PC-9 (cell line): ENCODE measurements at regions of chr10 and their contacts with region 1.

Region 1: GRCh38 chr10:511101-511848 is 178.2 kb downstream of the DIP2C start:
- DNase-seq: peak in 1 of 2 experiments; percentile 86
- H3K4me3 ChIP-seq: no peak overlapping the region
- H3K27ac ChIP-seq: no peak overlapping the region
- H3K4me1 ChIP-seq: no peaks in the 10 kb centered on the region
- H3K27me3 ChIP-seq: peaks cover 26% of the 10 kb centered on the region; the same call in 1 of the 2 replicates
- CTCF ChIP-seq: peak; percentile 78

Region 2: DNA sequence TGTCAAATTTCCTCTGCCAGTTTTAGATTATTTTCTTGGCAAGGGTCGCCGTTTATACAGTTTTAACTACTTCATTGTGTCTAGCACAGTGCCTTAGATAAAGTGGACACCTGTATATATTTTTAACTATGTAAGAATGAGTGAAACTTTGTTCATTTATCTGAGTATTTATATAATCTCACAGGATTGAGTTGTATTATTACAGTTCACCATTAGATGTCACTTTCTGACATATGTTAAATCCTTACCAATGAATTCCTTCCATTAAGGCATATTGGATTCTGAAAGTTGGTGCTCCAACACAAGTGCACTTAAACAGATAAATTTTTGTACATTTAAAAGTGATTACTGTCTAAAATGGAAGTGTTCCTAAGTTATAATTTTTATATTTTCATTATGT is 333.1 kb before region 1 on chr10:
- CTCF ChIA-PET with region 1: no interaction called
- POLR2A ChIA-PET with region 1: no interaction called
- intact Hi-C with region 1: loop called (anchors 5 kb)
- DNase-seq: no peak
- H3K4me3 ChIP-seq: no peak overlapping the region
- H3K27ac ChIP-seq: no peak overlapping the region
- H3K4me1 ChIP-seq: no peaks in the 10 kb centered on the region
- H3K27me3 ChIP-seq: no peaks in the 10 kb centered on the region
- CTCF ChIP-seq: peak; percentile 55

Region 3: DNA sequence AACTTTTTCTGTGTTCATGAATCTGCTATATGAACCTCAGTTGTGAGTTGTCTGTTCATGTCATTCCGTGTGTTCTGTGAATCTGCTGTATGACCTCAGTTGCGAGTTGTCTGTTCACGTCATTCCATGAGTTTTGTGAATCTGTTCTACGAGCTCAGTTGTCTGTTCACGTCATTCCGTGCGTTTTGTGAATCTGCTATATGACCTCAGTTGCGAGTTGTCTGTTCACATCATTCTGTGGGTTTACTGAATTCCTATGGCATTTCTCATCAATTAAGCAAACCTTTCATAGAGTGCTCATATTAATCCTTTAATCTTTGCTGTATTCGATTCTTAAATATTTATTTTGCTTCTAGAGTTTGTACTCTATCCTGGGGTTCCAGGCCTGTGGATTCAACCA is 27.6 kb after region 1 on chr10:
- CTCF ChIA-PET with region 1: no interaction called
- POLR2A ChIA-PET with region 1: no interaction called
- intact Hi-C with region 1: no loop called
- DNase-seq: no peak
- H3K4me3 ChIP-seq: no peak overlapping the region
- H3K27ac ChIP-seq: no peak overlapping the region
- H3K4me1 ChIP-seq: no peaks in the 10 kb centered on the region
- H3K27me3 ChIP-seq: peaks cover 48% of the 10 kb centered on the region
- CTCF ChIP-seq: no peak

Region 4: GRCh38 chr10:588241-589165 is 77.2 kb after region 1 on chr10:
- CTCF ChIA-PET with region 1: no interaction called
- POLR2A ChIA-PET with region 1: no interaction called
- intact Hi-C with region 1: loop called (anchors 1 kb)
- DNase-seq: peak in 1 of 2 experiments; percentile 14
- H3K4me3 ChIP-seq: no peak overlapping the region
- H3K27ac ChIP-seq: no peak overlapping the region
- H3K4me1 ChIP-seq: no peaks in the 10 kb centered on the region
- H3K27me3 ChIP-seq: peaks cover 47% of the 10 kb centered on the region
- CTCF ChIP-seq: no peak

Region 5: GRCh38 chr10:689433-690371 is 178.4 kb after region 1 on chr10 and contains the start of gene DIP2C:
- CTCF ChIA-PET with region 1: no interaction called
- POLR2A ChIA-PET with region 1: no interaction called
- intact Hi-C with region 1: loop called (anchors 5 kb)
- DNase-seq: peak in 1 of 2 experiments; percentile 19
- H3K4me3 ChIP-seq: no peak within 1 kb of the TSS
- H3K27ac ChIP-seq: no peak within 1 kb of the TSS
- H3K4me1 ChIP-seq: no peaks in the 10 kb centered on the region
- H3K27me3 ChIP-seq: no peaks in the 10 kb centered on the region; the same call in 1 of the 2 replicates
- CTCF ChIP-seq: no peak
- total RNA-seq, gene DIP2C: 0.83 and 1.1 TPM in 2 replicates

Region 6: DNA sequence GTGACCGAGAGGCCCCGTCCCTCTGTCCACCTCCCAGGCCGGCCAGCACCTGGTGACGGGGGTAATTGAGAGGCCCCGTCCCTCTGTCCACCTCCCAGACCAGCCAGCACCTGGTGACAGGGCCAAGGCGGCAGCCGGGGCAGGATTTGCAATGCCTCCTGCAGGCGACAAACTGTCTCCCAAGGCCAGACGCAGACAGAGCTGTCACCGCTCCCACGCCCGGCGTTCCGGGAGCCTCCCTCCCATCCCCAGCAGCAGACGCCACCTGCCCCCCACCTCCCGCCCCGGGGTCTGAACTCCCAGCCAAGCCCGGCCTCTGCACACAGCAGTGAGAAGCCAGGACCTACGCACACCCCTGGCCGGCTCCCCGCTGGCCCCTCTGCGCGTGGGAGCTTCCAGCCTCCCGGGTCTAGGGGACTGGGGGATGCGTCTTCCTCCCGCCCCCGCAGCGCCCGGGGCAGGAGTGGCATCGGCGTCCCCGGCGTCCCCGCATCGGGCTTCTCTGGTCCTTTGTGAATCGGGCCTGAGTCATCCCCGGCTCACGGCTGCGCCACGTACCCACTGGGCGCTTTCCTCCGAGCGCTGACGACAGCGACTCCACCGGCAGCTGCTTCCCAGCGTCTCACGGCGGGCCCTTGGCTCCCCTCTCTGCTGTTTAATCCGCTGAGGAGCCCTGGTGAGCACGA is 273.3 kb after region 1 on chr10:
- CTCF ChIA-PET with region 1: interaction called, 7 read pairs
- POLR2A ChIA-PET with region 1: no interaction called
- intact Hi-C with region 1: loop called (anchors 1 kb)
- DNase-seq: peak in 1 of 2 experiments; percentile 49
- H3K4me3 ChIP-seq: no peak overlapping the region; the same call in 1 of the 2 replicates
- H3K27ac ChIP-seq: no peak overlapping the region
- H3K4me1 ChIP-seq: no peaks in the 10 kb centered on the region
- H3K27me3 ChIP-seq: 0 out of 2 replicates have a peak, but pooled peaks cover 6% of the 10 kb centered on the region
- CTCF ChIP-seq: no peak

Region 7: GRCh38 chr10:810351-810846 is 299.1 kb after region 1 on chr10:
- CTCF ChIA-PET with region 1: interaction called, 4 read pairs
- POLR2A ChIA-PET with region 1: interaction called, 6 read pairs
- intact Hi-C with region 1: loop called (anchors 1 kb)
- DNase-seq: no peak
- H3K4me3 ChIP-seq: no peak overlapping the region
- H3K27ac ChIP-seq: no peak overlapping the region
- H3K4me1 ChIP-seq: no peaks in the 10 kb centered on the region
- H3K27me3 ChIP-seq: no peaks in the 10 kb centered on the region
- CTCF ChIP-seq: no peak